MCF 10A (cell line): ENCODE measurements at regions of chr17 and their contacts with region 1.

Region 1: DNA sequence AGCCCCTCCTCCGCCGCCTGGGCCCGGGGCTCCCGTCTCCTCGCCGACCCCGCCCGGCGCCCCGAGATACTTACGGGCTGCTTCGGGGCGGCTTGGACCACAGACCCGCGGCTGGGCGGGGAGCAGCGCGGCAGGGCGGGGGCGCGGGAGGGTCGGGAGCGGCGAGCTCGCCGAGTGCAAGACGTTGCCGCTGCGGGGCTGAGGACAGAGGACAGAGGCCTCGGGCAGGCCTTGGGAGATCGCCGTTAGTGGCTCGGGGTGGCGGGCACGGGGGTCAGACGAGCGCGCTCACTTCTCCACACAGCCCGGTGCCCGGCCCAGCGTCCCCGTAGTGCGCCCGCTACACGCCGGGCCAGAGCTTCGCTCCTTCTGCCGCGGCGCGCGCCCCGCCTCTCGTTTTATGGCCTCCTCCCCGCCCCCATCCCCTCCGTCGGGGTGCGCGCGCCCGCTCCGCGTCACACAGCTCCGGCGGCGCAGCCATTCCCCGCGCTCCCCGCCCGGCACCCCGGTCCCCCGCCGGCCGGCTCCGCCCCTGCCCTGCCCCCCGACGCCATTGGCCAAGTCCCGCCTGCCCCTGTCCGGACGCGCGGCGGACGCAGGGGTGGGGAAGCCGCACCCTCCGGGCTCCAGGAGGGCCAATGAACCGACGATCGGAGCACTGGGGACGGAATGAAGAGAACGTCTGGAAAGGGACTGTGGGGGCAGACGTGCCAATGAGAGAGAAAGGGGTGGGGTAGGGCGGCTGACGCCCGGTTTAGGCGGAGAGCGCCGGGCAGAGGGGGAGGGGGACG is at the start of gene TOB1:
- DNase-seq: peak; percentile 99
- H3K4me3 Mint-ChIP-seq: peak within 1 kb of the TSS; percentile 73
- H3K27ac Mint-ChIP-seq: peak within 1 kb of the TSS; percentile 93
- H3K4me1 Mint-ChIP-seq: peaks cover 20% of the 10 kb centered on the region
- H3K27me3 Mint-ChIP-seq: no peaks in the 10 kb centered on the region
- CTCF ChIP-seq: no peak
- total RNA-seq, gene TOB1: 53.1 and 66.0 TPM in 2 replicates

Region 2: DNA sequence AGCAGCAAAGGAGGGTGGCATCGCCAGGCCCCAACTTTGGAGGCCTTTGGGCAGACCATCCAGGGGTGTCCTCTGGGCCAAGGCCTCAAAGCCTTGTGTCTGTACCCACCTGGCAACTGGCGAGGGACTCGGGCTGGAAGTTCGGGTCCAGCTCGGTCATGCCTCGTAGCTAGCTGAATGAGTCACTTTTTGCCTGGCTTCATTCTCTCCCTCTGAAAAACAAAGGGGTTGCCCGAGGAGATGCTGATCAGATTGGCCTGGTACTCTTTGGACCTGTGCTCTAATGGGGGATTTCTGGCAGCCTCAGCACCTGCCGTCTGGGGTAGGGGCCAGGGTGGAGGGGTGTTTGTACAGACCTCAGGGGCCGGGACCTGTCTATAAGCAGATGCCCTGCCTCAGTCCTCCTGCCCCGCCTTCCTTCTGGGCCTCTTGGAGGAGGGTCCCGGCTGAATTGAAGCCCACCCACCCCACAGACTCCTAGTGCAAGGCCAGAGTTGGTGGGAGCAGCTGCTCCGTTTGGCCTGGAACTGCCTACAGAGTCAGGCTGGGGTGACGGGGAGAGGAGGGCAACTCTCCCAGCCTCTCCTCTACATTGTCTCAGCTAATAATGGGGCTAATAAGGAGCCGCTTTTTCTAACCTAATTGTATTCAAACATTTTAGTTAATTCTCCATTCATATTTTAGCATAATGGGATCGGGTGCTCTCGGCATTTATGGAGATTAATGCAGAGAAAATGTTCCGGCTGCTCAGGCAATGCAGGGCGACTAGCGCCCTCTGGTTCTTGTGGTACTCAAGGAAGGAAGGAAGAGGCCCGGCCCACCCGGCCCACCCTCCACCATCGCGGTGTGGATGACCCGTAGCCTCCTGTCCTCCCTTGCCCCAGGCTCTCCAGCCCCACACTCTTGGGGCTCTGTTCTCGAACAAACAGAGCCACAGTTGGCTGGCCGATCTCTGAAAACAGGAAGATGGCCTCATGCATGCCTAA is 252.9 kb before region 1 on chr17:
- CTCF ChIA-PET with region 1: no interaction called
- POLR2A ChIA-PET with region 1: no interaction called
- intact Hi-C with region 1: no loop called
- DNase-seq: no peak
- H3K4me3 Mint-ChIP-seq: no peak overlapping the region
- H3K27ac Mint-ChIP-seq: no peak overlapping the region
- H3K4me1 Mint-ChIP-seq: peaks cover 4% of the 10 kb centered on the region
- H3K27me3 Mint-ChIP-seq: no peaks in the 10 kb centered on the region
- CTCF ChIP-seq: no peak

Region 3: DNA sequence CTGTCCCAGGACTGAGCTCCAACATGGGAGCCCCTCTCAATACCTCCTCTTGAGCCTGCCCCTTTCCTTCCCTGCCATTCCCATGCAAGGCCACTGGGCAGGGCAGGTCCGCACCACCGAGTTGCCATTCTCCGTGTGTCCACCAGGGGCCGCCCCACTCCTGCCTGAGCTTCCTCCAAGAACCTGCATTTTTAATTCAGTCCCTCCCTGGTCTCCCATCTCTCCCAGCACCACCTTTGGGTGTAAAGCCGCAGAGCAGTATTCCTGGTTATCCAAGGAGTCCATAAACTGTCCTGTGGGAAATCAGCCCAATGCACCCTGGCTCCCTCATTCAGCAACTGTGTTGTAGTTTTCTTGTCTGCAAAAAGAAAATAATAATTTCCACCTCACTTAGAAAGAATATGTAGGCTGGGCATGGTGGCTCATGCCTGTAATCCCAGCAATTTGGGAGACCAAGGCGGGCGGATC is 83.0 kb before region 1 on chr17:
- CTCF ChIA-PET with region 1: interaction called, 3 read pairs
- POLR2A ChIA-PET with region 1: interaction called, 31 read pairs
- intact Hi-C with region 1: no loop called
- DNase-seq: peak; percentile 84
- H3K4me3 Mint-ChIP-seq: no peak overlapping the region
- H3K27ac Mint-ChIP-seq: no peak overlapping the region
- H3K4me1 Mint-ChIP-seq: peaks cover 28% of the 10 kb centered on the region
- H3K27me3 Mint-ChIP-seq: no peaks in the 10 kb centered on the region
- CTCF ChIP-seq: peak; percentile 94

Region 4: GRCh38 chr17:50883850-50884438 is 17.8 kb after region 1 on chr17:
- CTCF ChIA-PET with region 1: interaction called, 8 read pairs
- POLR2A ChIA-PET with region 1: interaction called, 129 read pairs
- intact Hi-C with region 1: no loop called
- DNase-seq: no peak
- H3K4me3 Mint-ChIP-seq: no peak overlapping the region
- H3K27ac Mint-ChIP-seq: peak overlapping the region; percentile 90
- H3K4me1 Mint-ChIP-seq: peaks cover 22% of the 10 kb centered on the region
- H3K27me3 Mint-ChIP-seq: no peaks in the 10 kb centered on the region
- CTCF ChIP-seq: no peak

Region 5: DNA sequence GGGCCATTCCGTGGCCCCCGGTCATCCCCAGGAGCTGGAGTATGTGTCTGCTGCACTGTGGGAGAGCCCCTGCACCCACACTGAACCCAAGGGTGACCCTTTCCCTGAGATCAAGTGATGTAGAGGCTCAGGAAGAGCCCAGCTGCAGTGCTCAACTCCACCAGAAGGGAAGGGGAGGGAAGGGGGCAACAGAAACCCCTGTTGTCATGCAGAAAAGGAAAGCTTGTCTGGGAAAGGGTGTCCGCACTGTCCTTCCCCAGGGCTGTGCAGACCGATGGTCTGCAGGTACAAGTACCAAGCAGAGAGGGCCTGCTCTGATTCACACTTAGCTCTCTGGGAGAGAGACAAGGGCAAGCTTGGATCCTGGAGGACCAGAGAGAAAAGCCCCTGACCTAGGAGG is 45.7 kb after region 1 on chr17:
- CTCF ChIA-PET with region 1: interaction called, 4 read pairs
- POLR2A ChIA-PET with region 1: interaction called, 25 read pairs
- intact Hi-C with region 1: no loop called
- DNase-seq: no peak
- H3K4me3 Mint-ChIP-seq: no peak overlapping the region
- H3K27ac Mint-ChIP-seq: no peak overlapping the region
- H3K4me1 Mint-ChIP-seq: peaks cover 12% of the 10 kb centered on the region
- H3K27me3 Mint-ChIP-seq: no peaks in the 10 kb centered on the region
- CTCF ChIP-seq: no peak

Region 6: DNA sequence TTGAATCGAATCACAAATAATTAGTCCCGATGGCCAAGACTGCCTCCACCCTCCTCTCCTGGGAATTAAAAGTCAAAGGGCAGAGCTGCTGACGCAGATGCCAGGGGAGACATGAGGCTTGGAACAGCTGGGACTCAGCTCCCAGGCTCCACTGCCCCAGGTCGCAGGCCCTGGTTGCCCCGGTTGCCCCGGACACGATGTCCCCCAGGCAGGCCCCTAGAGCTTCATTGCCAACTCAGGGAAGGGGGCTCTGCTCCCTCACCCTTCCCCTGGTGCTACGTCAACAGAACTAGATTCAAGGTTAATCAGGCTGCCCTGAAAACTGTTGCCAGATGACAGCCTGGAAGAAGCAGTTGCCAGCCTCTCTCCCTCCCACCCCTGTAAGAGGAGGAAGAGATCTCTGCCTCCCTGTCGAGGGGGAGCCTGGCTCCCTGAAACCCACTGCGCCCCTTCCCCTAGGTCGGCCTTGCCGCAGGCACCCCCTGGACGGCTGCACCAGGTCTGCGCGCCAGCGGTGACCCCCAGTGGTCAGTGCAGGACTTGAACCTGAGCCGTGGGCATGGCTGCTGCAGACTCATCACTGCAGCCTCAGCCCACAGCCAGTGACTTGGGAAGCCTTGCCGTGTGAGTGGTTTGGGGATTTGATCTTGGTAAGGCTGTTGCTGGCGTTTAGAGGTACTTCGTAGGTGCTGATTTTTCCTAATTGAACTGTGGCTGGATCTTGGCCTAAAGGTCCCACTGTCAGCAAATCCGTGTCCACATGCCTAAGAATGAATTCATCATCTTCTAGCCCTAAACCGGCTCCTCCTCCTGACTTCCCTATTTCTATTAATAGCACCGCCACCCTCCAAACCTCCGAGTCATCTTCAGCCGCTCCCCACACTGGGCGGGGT is 84.1 kb after region 1 on chr17:
- CTCF ChIA-PET with region 1: interaction called, 40 read pairs
- POLR2A ChIA-PET with region 1: interaction called, 473 read pairs
- intact Hi-C with region 1: loop called (anchors 1 kb)
- DNase-seq: peak; percentile 92
- H3K4me3 Mint-ChIP-seq: peak overlapping the region; percentile 42
- H3K27ac Mint-ChIP-seq: peak overlapping the region; percentile 67
- H3K4me1 Mint-ChIP-seq: peaks cover 49% of the 10 kb centered on the region
- H3K27me3 Mint-ChIP-seq: no peaks in the 10 kb centered on the region
- CTCF ChIP-seq: peak; percentile 89

Region 7: GRCh38 chr17:51153210-51154072 is 287.3 kb after region 1 on chr17 and contains the start of gene NME1:
- CTCF ChIA-PET with region 1: no interaction called
- POLR2A ChIA-PET with region 1: interaction called, 7 read pairs
- intact Hi-C with region 1: loop called (anchors 5 kb)
- DNase-seq: peak; percentile 99
- H3K4me3 Mint-ChIP-seq: no peak within 1 kb of the TSS
- H3K27ac Mint-ChIP-seq: no peak within 1 kb of the TSS
- H3K4me1 Mint-ChIP-seq: no peaks in the 10 kb centered on the region
- H3K27me3 Mint-ChIP-seq: no peaks in the 10 kb centered on the region
- CTCF ChIP-seq: peak; percentile 70
- total RNA-seq, gene NME1: 268 and 324 TPM in 2 replicates